Activated CD4-positive, alpha-beta memory T cell treated with anti-CD3 and anti-CD28 coated beads, Interleukin-2, amount 10 ng/mL, durations not matched to agents 7 days and 5 days (primary cell): ENCODE measurements at regions of chr17 and their contacts with region 1.

Region 1: DNA sequence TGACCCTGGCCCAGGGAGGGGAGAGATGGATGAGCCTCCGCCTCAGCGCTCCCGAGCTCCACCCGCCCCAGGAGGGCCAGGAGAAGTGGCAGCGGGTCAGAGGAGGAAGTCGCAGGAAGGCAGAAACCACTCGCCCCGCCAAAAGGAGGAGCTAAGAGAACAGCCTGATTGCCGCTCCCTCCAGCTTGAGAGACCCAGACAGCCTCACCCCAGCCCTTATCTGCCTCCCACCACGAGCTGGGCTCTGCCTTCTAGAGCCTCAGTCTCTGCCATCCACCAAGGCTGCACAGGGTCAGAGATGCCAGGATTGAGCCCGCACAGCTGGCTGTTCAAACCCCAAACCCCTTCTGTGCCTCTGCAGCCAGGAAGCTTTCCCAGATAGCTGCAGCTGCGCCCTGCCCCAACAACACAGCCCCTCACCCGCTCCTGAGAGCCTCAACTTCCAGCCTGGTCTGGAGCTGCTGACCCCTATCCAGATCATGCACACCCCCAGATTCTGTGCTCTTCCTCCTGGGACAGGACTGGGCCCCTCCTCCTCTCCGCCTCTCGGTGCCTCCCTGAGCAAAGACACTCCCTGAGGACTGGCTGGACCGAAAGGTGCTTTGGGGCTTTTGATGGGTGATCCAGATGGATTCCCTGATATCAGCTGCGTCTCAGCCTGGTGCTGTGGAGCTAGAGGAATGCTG is 1.0 kb upstream of the ATP2A3 start:
- DNase-seq: peak; percentile 85
- H3K4me3 Mint-ChIP-seq: peak overlapping the region; percentile 86
- H3K27ac Mint-ChIP-seq: peak overlapping the region; percentile 95
- H3K4me1 Mint-ChIP-seq: peaks cover 48% of the 10 kb centered on the region
- H3K27me3 Mint-ChIP-seq: peaks cover 3% of the 10 kb centered on the region

Region 2: DNA sequence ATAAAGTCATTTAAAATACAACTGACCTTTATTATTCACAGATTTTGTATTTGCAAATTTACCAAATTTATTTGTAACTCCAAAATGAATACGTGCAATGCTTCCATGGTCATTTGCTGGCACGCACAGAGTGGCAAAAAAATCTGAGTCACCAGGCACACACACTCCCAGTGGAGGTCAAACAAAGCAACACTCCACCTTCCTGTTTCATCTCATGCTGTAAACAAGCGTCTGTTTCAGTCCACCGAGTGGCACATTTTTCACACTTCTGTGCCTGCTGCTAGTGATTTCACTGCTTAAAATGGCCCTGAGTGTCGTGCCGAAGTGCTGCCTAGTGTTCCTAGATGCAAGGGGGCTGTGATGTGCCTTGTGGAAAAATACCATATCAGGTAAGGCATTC is 146.5 kb before region 1 on chr17:
- CTCF ChIA-PET with region 1: no interaction called
- POLR2A ChIA-PET with region 1: no interaction called
- DNase-seq: no peak
- H3K4me3 Mint-ChIP-seq: no peak overlapping the region
- H3K27ac Mint-ChIP-seq: no peak overlapping the region
- H3K4me1 Mint-ChIP-seq: peaks cover 2% of the 10 kb centered on the region
- H3K27me3 Mint-ChIP-seq: no peaks in the 10 kb centered on the region

Region 3: GRCh38 chr17:3921502-3922319 is 43.5 kb before region 1 on chr17:
- CTCF ChIA-PET with region 1: no interaction called
- POLR2A ChIA-PET with region 1: interaction called, 24 read pairs
- DNase-seq: no peak
- H3K4me3 Mint-ChIP-seq: no peak overlapping the region
- H3K27ac Mint-ChIP-seq: no peak overlapping the region
- H3K4me1 Mint-ChIP-seq: peaks cover 11% of the 10 kb centered on the region
- H3K27me3 Mint-ChIP-seq: no peaks in the 10 kb centered on the region